Posterior cingulate gyrus (tissue), 11 donors: ENCODE measurements at regions of chr19 and their contacts with region 1.

Region 1: GRCh38 chr19:54137086-54137921 is at the start of gene CNOT3:
- DNase-seq: peak; percentile 98 to 100 (median 99)

Region 2: GRCh38 chr19:54115109-54116063 is 21.9 kb before region 1 on chr19 and contains the starts of genes PRPF31 and TFPT:
- intact Hi-C with region 1: loop called (anchors 1 kb)
- DNase-seq: peak; percentile 90 to 99 (median 95)